AG04450 (cell line): ENCODE measurements at regions of chr20 and their contacts with region 1.

Region 1: DNA sequence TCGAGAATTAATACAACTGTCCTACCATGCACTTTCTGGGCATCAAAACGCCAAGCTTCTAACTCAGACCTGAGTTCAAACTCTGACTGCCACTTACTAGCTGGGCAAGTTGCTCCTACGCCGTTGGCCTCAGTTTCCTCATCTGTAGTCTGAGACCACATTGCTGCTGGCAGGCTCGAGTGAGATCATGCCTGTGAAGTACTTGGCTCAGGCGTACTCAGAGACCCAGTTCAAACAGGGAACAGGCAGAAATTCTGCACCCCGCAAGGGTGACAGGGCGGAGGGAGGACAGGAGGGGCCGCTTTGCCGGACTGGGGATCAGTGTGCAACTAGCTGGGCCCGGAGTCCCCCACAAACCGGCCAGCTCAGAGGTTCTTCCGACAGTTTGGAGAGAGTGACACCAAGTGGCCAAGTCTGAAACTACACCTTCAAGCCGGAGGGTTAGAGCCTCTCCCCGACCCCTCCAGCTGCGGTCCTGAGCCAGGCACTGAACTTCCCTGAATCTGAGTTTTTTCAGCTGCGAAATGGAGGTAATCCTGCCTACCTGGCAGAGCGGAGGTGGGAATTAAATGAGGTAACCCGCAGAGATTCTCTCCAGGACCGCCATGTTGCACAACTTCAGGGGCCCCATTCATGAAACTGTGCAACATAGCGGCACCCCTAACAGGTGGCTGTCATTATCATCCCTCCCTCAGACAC is 46.0 kb upstream of the PTPN1 start:
- DNase-seq: no peak
- H3K4me3 ChIP-seq: no peak overlapping the region
- H3K27ac ChIP-seq: no peak overlapping the region
- H3K27me3 ChIP-seq: no peaks in the 10 kb centered on the region
- CTCF ChIP-seq: peak; percentile 76

Region 2: DNA sequence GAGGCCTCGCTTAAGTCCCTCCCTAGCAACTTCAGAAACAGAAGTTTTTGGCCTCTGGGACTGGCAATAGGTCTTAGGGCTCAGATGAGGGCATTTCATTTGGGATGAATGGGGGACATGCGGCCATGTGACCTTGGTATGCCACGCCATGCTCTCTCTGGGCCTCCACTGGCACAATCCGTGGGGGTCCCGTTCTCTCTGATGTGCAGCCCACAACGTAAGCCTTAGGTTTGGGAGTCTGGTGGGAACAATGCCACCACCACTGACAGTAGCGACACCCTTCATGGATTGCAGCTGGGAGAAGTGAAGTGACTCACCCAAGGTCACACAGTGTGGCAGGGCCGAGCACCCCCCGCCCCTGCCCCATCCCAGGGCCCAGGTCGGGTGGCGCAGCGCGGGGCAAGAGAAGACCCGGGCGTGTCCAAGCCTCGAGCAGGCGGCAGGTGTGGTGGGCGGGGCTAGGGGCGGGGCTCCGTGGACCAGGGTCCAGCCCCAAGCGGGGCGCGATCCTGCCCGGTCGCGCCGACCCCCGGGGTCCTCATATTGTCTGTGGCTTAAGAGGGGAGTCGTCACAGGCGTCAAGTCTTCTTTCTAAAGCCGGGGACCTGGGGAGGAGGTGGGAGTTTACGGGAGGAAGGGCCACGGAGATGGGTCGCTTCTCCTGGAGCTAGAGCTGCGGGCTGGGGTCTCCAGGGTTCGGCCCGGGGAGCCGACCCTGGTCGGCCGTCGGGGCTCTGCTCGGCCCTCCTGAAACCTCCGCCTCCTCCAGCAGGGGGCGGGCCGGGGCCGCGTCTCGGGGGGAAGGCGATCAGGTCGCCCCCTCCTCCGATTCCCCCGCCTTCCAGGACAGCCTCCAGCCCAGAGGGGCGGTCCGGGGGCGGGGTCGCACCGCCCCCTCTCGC is 274.2 kb before region 1 on chr20:
- CTCF ChIA-PET with region 1: interaction called, 28 read pairs
- POLR2A ChIA-PET with region 1: interaction called, 3 read pairs
- DNase-seq: peak; percentile 76
- H3K4me3 ChIP-seq: peak overlapping the region; percentile 97
- H3K27ac ChIP-seq: peak overlapping the region; percentile 39
- H3K27me3 ChIP-seq: no peaks in the 10 kb centered on the region
- CTCF ChIP-seq: peak; percentile 66